Activated naive CD4-positive, alpha-beta T cell treated with anti-CD3 and anti-CD28 coated beads for 36 hours (primary cell): ENCODE measurements at regions of chr2 and their contacts with region 1.

Region 1: DNA sequence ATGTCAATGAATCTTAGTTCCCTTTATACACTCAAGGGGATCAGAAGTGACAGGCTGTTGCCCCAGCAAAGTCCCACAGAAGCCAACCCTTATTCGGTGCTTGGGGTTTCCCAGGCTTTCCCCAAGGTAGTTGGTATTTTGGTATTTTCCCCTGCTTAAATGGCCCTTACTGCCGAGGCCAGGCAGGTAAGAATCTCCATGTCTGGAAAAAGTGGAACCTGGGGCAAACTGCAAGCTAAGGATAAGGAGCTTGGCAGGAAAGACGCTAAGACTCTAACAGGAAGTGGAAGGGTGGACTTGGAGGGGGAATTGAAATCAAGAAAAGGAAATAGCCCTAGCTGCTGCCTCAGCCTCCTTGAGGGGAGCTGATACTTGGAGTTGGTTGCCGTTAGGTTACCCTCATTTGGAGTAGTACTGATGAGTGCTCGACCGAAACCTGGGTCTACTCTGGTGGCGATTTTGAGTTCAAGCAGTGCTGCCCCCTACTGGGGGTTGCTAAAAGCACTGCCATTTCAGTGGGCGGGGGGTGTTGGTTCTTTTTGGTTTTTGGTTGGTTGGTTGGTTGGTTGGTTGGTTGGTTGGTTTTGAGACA is 3.3 kb upstream of the GPBAR1 start:
- DNase-seq: peak; percentile 79
- H3K4me3 Mint-ChIP-seq: no peak overlapping the region
- H3K27ac Mint-ChIP-seq: peak overlapping the region; percentile 87
- H3K4me1 Mint-ChIP-seq: peaks cover 18% of the 10 kb centered on the region
- H3K27me3 Mint-ChIP-seq: no peaks in the 10 kb centered on the region

Region 2: DNA sequence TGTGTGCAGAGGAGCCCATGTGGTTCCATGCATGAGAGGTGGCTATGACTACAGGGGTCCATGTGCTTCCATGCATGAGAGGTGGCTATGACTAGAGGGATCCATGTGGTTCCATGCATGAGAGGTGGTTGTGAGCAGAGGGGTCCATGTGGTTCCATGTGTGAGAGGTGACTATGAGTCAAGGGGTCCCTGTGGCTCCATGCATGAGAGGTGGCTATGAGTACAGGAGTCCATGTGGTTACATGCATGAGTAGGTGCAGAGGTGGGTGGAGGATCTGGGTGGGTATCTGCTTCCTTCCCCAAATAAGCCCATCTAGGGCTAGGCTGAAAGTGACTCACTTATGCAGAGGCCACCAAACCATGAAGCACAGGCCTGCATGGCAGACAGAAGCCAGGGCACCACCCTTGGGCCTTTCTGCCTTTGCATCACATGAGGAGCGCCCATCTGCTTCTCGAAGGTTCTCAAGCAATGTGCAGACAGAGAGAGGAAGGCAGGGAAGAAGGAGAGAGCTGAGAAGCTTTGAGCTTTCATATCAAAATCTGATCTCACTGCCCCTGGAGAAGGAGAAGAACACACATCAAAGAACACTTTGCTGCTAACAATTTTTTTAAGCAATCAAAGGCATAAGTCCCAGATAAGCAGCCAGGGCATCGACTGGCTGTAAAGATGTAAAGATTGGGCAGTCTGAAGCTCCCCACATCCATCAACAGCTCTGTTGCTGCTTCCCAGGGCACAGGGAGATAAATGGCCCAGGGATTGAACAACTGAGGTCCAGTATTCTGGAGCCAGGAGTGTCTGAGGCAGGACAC is 392.3 kb before region 1 on chr2:
- CTCF ChIA-PET with region 1: no interaction called
- intact Hi-C with region 1: no loop called
- DNase-seq: no peak
- H3K4me3 Mint-ChIP-seq: no peak overlapping the region
- H3K27ac Mint-ChIP-seq: no peak overlapping the region
- H3K4me1 Mint-ChIP-seq: no peaks in the 10 kb centered on the region
- H3K27me3 Mint-ChIP-seq: no peaks in the 10 kb centered on the region

Region 3: GRCh38 chr2:218168635-218169462 is 88.6 kb before region 1 on chr2:
- CTCF ChIA-PET with region 1: interaction called, 9 read pairs
- intact Hi-C with region 1: loop called (anchors 1 kb)
- DNase-seq: peak; percentile 79
- H3K4me3 Mint-ChIP-seq: no peak overlapping the region
- H3K27ac Mint-ChIP-seq: no peak overlapping the region
- H3K4me1 Mint-ChIP-seq: peaks cover 26% of the 10 kb centered on the region
- H3K27me3 Mint-ChIP-seq: no peaks in the 10 kb centered on the region

Region 4: DNA sequence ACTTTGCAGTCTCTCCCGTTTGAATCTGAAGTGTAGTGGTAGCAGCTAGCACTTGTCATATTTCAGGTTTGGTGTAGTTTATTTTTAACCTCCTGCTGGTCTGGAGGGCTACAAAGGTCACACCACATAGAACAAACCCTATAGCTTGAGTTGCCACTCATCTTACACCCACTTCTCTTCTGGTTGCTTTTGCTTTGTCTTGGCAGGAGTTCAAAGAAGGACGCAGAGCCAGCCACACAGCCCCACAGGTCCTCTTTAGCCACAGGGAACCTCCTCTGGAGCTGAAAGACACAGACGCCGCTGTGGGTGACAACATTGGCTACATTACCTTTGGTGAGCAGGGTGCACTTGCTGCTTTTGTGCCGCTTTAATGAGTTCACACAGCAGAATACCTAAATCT is 12.3 kb before region 1 on chr2:
- CTCF ChIA-PET with region 1: interaction called, 24 read pairs
- intact Hi-C with region 1: no loop called
- DNase-seq: no peak
- H3K4me3 Mint-ChIP-seq: no peak overlapping the region
- H3K27ac Mint-ChIP-seq: peak overlapping the region; percentile 46
- H3K4me1 Mint-ChIP-seq: peaks cover 5% of the 10 kb centered on the region
- H3K27me3 Mint-ChIP-seq: no peaks in the 10 kb centered on the region